Activated T-helper 2 cell treated with anti-CD3 and anti-CD28 coated beads, Interferon-gamma antibody, Interleukin-2, Interleukin-4, amounts not matched to agents 10 μg/mL and 5 μg/mL and 100 μg/mL, durations not matched to agents 14 hours and 24 hours and 36 hours (primary cell): ENCODE measurements at regions of chr6 and their contacts with region 1.

Region 1: DNA sequence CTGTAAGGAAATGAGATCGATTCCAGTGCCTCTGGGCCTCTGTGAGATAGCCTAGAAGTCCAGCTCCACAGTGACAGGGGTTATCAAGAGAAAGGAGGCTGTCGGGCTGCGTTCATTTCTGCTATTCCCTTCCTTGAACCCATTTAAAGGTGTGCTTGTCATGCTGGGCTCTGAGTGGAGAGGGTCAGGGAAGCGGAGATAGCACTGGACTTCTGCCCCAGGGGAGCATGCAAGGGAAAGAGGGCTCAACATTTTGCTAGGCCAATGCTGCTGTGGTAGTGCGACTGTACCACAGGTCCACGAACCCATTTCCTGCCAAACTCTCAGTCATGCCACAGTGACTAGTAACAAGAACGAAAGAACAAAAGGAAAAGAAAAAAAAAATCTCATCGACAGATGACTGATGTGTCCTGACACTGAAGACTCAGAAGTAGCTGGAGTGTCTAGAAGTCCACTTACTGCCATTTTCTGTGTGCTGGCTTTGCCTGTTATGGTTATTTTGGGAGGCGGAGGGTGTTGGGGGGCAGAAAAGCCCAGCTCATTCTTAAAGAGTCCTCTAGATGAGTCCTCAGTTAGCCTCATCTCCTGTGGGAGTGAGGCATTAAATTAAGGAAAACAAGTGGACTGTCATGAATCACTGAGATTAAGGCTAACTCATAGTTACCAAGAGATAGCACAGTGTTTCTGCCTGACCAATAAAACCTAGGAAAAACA is 8.1 kb downstream of the NEDD9 start:
- DNase-seq: peak; percentile 51
- H3K4me3 Mint-ChIP-seq: peak overlapping the region; percentile 38
- H3K27ac Mint-ChIP-seq: peak overlapping the region; percentile 80
- H3K4me1 Mint-ChIP-seq: peaks cover 67% of the 10 kb centered on the region
- H3K27me3 Mint-ChIP-seq: no peaks in the 10 kb centered on the region

Region 2: DNA sequence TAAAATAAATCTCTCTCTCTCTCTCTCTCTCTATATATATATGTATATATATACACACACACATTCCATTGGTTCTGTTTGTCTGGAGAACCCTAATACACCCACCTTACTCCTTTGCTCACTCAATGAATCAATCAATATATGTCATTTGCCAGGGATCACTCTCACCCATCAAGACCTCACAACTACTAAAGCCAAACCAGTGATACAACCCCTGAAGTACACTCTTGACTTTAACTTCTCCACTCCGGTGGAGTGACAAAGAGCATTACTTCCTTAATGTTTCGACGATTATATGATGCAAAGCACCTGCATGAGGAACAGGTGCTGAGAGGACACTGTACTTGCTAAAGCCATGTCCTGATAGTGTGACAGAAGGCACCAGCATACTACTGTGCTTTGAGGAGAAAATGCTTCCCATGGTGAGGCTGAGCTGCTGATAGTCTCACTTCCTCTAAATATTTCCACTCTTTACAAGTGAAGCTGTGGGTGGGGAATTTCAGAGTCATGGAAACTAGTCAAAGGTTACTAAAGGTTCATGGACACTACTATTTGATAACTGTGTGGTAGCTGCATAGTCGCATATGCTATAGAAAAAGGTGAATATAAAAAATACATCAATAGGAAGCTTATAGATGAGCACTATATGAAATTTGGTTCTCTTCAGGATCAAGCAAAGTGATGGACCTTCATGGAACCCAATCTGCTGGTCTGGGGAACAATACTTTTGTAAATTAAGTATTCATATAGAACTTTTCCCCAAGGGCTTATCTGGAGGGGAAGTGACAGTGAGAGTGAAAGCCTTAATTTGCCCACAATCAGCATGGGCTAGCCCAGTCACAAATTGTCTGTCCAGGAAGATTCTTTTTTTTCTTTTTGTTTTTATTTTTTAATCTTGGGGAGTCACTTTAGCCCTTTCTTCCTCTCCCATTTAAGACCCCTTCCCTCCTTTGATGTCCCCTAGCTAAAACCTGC is 149.9 kb after region 1 on chr6:
- intact Hi-C with region 1: loop called (anchors 2 kb)
- DNase-seq: no peak
- H3K4me3 Mint-ChIP-seq: peak overlapping the region; percentile 28
- H3K27ac Mint-ChIP-seq: peak overlapping the region; percentile 86
- H3K4me1 Mint-ChIP-seq: peaks cover 58% of the 10 kb centered on the region
- H3K27me3 Mint-ChIP-seq: no peaks in the 10 kb centered on the region

Region 3: DNA sequence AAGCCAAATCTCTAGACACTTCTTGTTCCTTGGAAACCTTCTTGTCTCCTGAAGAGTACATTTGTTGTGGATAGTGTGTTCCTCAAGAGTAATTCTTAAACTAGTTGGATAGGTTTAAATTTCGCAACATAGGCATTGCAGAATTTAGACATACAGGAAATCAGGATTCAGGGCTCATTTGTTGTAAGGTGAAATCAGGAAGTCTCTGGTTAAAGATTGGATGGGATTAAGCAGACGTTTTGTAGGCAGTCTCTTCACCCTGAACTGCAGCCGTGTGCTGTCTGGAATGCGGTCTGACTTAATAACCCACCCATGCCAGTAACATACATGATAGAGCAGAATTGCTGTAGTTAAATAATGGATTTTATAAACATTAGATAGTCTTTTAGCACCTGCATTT is 809.4 kb after region 1 on chr6:
- intact Hi-C with region 1: no loop called
- DNase-seq: no peak
- H3K4me3 Mint-ChIP-seq: no peak overlapping the region
- H3K27ac Mint-ChIP-seq: no peak overlapping the region
- H3K4me1 Mint-ChIP-seq: peaks cover 50% of the 10 kb centered on the region
- H3K27me3 Mint-ChIP-seq: no peaks in the 10 kb centered on the region